ENCODE measurements at regions of chr3 and their contacts with region 1.

Region 1: DNA sequence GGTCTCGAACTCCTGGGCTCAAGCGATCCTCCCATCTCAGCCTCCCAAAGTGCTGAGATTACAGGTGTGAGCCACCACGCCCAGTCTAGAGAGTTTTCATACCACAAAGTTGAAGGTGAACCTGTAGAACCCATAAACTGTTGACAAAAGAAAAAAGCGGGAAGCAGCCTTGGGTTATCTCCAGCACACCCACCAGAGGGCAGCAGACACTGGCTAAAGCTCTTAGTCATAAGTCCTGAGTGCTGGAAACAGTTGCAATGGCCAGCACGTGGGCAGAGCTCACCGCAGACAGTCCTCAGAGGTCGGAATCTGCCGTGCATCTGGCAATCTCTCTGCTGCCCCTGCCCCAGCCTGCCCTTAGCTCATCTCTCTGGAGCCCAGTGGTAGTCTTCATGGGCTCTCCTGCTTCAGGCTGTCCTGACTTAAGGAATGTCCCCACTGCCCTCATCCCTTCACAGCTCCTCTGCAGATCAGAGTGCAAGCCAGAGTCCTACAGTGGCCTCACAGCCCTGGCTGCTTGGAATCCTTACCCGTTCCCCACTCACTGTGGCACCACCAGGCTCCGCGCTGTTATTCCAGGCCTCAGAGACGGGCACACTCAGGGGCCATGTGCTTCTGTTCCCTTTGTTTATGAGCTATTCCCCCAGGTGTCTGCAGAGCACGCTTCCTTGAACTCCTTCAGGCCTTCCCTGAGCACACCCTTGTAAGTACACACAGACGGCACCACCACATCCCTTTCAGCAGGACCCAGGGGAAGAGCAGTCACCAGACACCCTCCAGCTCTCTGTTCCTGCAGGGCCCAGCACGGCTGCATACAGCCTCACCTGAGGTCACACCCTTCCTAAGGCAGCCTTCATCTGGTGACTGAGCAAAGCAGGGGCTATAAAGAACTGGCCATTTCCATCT is 8.8 kb upstream of the ELP6 start:
- DNase-seq: peak; percentile 49 to 76 (median 65)
- H3K4me3 ChIP-seq: no peak overlapping the region
- H3K4me3 Mint-ChIP-seq: no peak overlapping the region
- H3K27ac ChIP-seq: no peak overlapping the region
- H3K27ac Mint-ChIP-seq: peak overlapping the region in 2 of 7 donors; percentile 66
- H3K4me1 ChIP-seq: no peaks in the 10 kb centered on the region
- H3K4me1 Mint-ChIP-seq: peaks cover 0 to 1% (median 0%) of the 10 kb centered on the region in 4 donors
- H3K27me3 ChIP-seq: no peaks in the 10 kb centered on the region
- H3K27me3 Mint-ChIP-seq: no peaks in the 10 kb centered on the region

Region 2: DNA sequence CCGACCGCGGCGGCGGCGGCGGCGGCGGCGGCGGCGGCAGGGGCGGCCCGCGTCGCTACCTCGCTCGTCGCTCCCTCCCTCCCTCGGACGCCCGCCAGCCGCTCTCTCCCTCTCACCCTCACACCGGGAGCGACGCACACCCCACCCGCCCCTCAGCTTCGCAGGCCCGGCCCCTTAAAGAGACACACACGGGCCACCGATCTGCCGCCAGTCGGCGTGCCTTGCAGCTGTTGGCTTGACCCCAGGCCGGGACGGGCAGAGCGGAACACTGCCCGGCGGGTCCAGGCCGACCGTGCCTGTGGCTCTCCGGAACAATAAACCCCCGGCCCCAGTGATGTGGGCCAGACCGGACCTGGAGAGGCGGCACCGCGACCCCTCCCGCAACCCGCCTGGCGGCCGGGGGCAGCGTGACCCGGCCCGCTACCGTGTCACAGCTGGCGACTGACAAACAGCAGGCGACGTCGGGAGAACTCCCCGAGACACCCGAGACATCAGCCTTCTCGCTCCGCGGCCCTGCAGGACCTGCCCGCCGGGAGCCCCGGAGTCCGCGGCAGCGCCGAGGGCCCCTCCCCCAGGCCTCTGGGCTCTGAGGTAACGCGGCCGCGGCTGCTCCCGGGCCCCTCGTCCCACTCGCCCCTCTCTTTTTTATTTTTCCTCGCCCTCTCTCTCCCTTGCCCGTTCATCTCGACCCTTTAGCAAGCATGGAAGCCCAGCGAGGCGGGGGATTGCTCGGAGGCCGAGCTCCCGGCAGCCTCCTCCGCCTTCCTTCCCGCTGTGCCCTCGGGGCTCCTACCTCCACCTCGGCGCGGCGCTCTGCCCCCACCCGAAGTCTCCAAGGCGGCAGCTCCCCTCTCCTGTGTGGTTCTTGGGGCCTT is 358.1 kb before region 1 on chr3 and contains the start of gene SETD2:
- CTCF ChIA-PET with region 1: no interaction called
- POLR2A ChIA-PET with region 1: no interaction called
- intact Hi-C with region 1: no loop called
- DNase-seq: peak; percentile 83 to 90 (median 85)
- H3K4me3 ChIP-seq: peak within 1 kb of the TSS; percentile 94 to 95
- H3K4me3 Mint-ChIP-seq: peak within 1 kb of the TSS; percentile 97 to 100 (median 98)
- H3K27ac ChIP-seq: peak within 1 kb of the TSS; percentile 85
- H3K27ac Mint-ChIP-seq: peak within 1 kb of the TSS; percentile 85 to 100 (median 99)
- H3K4me1 ChIP-seq: peaks cover 50% of the 10 kb centered on the region
- H3K4me1 Mint-ChIP-seq: peaks cover 34 to 58% (median 46%) of the 10 kb centered on the region in 4 donors
- H3K27me3 ChIP-seq: no peaks in the 10 kb centered on the region
- H3K27me3 Mint-ChIP-seq: peaks cover 0 to 1% of the 10 kb centered on the region in 2 donors
- total RNA-seq, gene SETD2: 74.0 to 74.1 TPM

Region 3: GRCh38 chr3:47533481-47533880 is 11.1 kb after region 1 on chr3:
- CTCF ChIA-PET with region 1: interaction called, 13 read pairs
- POLR2A ChIA-PET with region 1: no interaction called
- intact Hi-C with region 1: no loop called
- DNase-seq: no peak
- H3K4me3 ChIP-seq: no peak overlapping the region
- H3K4me3 Mint-ChIP-seq: no peak overlapping the region
- H3K27ac ChIP-seq: no peak overlapping the region
- H3K27ac Mint-ChIP-seq: no peak overlapping the region
- H3K4me1 ChIP-seq: no peaks in the 10 kb centered on the region
- H3K4me1 Mint-ChIP-seq: no peaks in the 10 kb centered on the region
- H3K27me3 ChIP-seq: no peaks in the 10 kb centered on the region
- H3K27me3 Mint-ChIP-seq: peaks cover 4 to 15% of the 10 kb centered on the region in 2 donors

Region 4: GRCh38 chr3:47781685-47782445 is 259.5 kb after region 1 on chr3 and contains the start of gene SMARCC1:
- CTCF ChIA-PET with region 1: interaction called, 140 read pairs
- POLR2A ChIA-PET with region 1: interaction called, 4 read pairs
- intact Hi-C with region 1: no loop called
- DNase-seq: peak; percentile 95 to 98 (median 98)
- H3K4me3 ChIP-seq: peak within 1 kb of the TSS; percentile 71 to 91
- H3K4me3 Mint-ChIP-seq: peak within 1 kb of the TSS; percentile 92 to 97 (median 94)
- H3K27ac ChIP-seq: peak within 1 kb of the TSS; percentile 96
- H3K27ac Mint-ChIP-seq: peak within 1 kb of the TSS; percentile 95 to 99 (median 99)
- H3K4me1 ChIP-seq: peaks cover 39% of the 10 kb centered on the region
- H3K4me1 Mint-ChIP-seq: peaks cover 16 to 33% (median 21%) of the 10 kb centered on the region in 4 donors
- H3K27me3 ChIP-seq: no peaks in the 10 kb centered on the region
- H3K27me3 Mint-ChIP-seq: no peaks in the 10 kb centered on the region
- total RNA-seq, gene SMARCC1: 85.7 to 101 TPM

Region 5: GRCh38 chr3:47791193-47791855 is 269.0 kb after region 1 on chr3:
- CTCF ChIA-PET with region 1: interaction called, 140 read pairs
- POLR2A ChIA-PET with region 1: interaction called, 15 read pairs
- intact Hi-C with region 1: loop called (anchors 1 kb)
- DNase-seq: no peak
- H3K4me3 ChIP-seq: no peak overlapping the region
- H3K4me3 Mint-ChIP-seq: peak overlapping the region in 1 of 8 donors; percentile 46
- H3K27ac ChIP-seq: no peak overlapping the region
- H3K27ac Mint-ChIP-seq: no peak overlapping the region
- H3K4me1 ChIP-seq: no peaks in the 10 kb centered on the region
- H3K4me1 Mint-ChIP-seq: peaks cover 0 to 1% (median 0%) of the 10 kb centered on the region in 4 donors
- H3K27me3 ChIP-seq: no peaks in the 10 kb centered on the region
- H3K27me3 Mint-ChIP-seq: no peaks in the 10 kb centered on the region

Region 6: GRCh38 chr3:47802734-47803477 is 280.6 kb after region 1 on chr3 and contains the start of gene DHX30:
- CTCF ChIA-PET with region 1: interaction called, 17 read pairs
- POLR2A ChIA-PET with region 1: no interaction called
- intact Hi-C with region 1: no loop called
- DNase-seq: peak; percentile 81 to 90 (median 84)
- H3K4me3 ChIP-seq: peak within 1 kb of the TSS; percentile 95 to 97
- H3K4me3 Mint-ChIP-seq: peak within 1 kb of the TSS; percentile 93 to 97 (median 95)
- H3K27ac ChIP-seq: peak within 1 kb of the TSS; percentile 90
- H3K27ac Mint-ChIP-seq: peak within 1 kb of the TSS; percentile 91 to 98 (median 97)
- H3K4me1 ChIP-seq: peaks cover 27% of the 10 kb centered on the region
- H3K4me1 Mint-ChIP-seq: peaks cover 15 to 27% (median 22%) of the 10 kb centered on the region in 4 donors
- H3K27me3 ChIP-seq: no peaks in the 10 kb centered on the region
- H3K27me3 Mint-ChIP-seq: no peaks in the 10 kb centered on the region
- total RNA-seq, gene DHX30: 86.5 to 93.0 TPM

Region 7: GRCh38 chr3:47989981-47990440 is 467.7 kb after region 1 on chr3:
- CTCF ChIA-PET with region 1: interaction called, 17 read pairs
- POLR2A ChIA-PET with region 1: no interaction called
- intact Hi-C with region 1: loop called (anchors 1 kb)
- DNase-seq: peak; percentile 69 to 75 (median 73)
- H3K4me3 ChIP-seq: no peak overlapping the region
- H3K4me3 Mint-ChIP-seq: no peak overlapping the region
- H3K27ac ChIP-seq: no peak overlapping the region
- H3K27ac Mint-ChIP-seq: peak overlapping the region in 1 of 7 donors; percentile 87
- H3K4me1 ChIP-seq: no peaks in the 10 kb centered on the region
- H3K4me1 Mint-ChIP-seq: peaks cover 2 to 7% (median 5%) of the 10 kb centered on the region in 4 donors
- H3K27me3 ChIP-seq: no peaks in the 10 kb centered on the region
- H3K27me3 Mint-ChIP-seq: no peaks in the 10 kb centered on the region